Uterus (tissue), 4 donors: ENCODE measurements at regions of chr1 and their contacts with region 1.

Region 1: GRCh38 chr1:161486806-161487741 is 18.2 kb upstream of the FCGR2A start:
- DNase-seq: peak; percentile 31 to 39
- H3K4me3 ChIP-seq: no peak overlapping the region
- H3K27ac ChIP-seq: no peak overlapping the region
- H3K4me1 ChIP-seq: no peaks in the 10 kb centered on the region
- H3K27me3 ChIP-seq: no peaks in the 10 kb centered on the region
- CTCF ChIP-seq: peak; percentile 42 to 66 (median 52)
- POLR2A ChIP-seq: no peak

Region 2: DNA sequence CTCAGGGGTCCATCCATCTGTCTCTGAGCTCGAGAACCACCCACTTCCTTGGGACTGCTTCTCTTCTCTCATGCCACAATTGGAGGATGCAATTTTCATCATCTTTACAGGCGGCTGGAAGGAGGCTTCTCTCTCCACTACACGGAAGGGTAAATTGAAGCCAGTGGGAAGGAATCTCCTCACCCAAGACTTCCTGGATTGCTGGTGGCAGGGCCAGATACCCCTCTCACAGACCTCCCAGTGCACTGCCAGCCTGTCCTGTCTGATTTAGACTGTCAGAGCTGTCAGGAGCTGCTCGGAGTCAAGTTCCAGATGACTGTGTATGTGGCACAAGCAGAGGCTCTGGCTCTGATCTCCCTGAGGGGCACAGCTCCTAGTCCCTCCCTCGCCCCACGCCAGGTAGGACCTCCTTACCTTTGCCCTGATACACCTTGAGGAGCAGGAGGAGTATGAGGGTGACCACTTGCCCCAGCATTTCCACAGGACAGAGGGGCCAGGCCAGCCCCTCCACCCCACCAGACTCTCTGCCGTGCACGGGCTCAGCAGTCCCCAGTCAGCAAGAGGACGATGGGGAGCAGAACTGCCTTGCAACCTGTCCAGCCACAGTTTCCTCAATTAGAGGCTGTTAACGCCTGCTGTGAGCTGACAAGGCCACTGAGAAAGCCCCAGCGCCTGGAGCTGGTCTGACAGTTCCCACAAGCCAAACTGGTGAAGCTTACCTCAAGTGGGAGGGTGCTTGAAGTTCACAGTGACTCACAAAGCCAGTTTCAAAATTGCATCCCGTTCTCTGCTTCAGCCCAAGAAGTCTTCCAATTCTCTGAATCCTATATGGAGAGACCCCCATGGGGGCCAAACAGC is 624.6 kb before region 1 on chr1 and contains the start of gene CD244:
- intact Hi-C with region 1: no loop called
- DNase-seq: no peak
- H3K4me3 ChIP-seq: no peak within 1 kb of the TSS
- H3K27ac ChIP-seq: no peak within 1 kb of the TSS
- H3K4me1 ChIP-seq: no peaks in the 10 kb centered on the region
- H3K27me3 ChIP-seq: no peaks in the 10 kb centered on the region
- CTCF ChIP-seq: no peak
- POLR2A ChIP-seq: no peak
- total RNA-seq, gene CD244: 0.52 to 1.2 TPM in 2 of 4 donors, not detected in the others

Region 3: GRCh38 chr1:161511018-161511755 is 24.1 kb after region 1 on chr1:
- intact Hi-C with region 1: no loop called
- DNase-seq: no peak
- H3K4me3 ChIP-seq: no peak overlapping the region
- H3K27ac ChIP-seq: no peak overlapping the region
- H3K4me1 ChIP-seq: no peaks in the 10 kb centered on the region
- H3K27me3 ChIP-seq: no peaks in the 10 kb centered on the region
- CTCF ChIP-seq: no peak
- POLR2A ChIP-seq: no peak

Region 4: DNA sequence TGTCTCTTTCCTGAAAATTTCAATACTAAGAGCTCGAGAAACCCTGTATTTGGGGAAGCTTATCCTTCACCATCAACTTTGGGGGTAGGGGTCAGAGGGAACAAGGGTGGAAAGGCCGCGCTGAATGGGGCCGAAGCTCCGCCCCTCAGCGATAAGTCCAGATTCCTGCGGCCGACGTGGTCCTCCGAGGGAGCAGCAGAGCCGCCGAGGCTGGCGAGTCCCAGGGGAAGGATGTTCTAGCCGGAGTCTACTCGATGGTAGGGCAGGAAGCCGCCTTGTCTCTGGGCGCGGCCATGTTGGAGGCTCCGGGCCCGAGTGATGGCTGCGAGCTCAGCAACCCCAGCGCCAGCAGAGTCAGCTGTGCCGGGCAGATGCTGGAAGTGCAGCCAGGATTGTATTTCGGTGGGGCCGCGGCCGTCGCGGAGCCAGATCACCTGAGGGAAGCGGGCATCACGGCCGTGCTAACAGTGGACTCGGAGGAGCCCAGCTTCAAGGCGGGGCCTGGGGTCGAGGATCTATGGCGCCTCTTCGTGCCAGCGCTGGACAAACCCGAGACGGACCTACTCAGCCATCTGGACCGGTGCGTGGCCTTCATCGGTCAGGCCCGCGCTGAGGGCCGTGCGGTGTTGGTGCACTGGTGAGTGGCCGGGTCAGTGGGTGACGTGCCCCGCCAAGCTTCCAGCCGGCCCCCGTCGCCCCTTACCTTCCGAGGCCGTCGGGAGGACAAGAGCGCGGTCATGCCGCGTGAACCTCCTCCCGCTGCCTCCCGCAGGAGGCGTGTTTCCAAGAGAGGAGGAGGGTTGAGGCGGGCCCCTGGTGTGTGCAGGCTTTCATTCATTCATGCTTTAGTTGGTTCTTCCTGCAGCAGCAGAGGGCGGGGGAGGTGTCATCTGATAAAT is 262.7 kb after region 1 on chr1 and contains the start of gene DUSP12:
- intact Hi-C with region 1: loop called (anchors 10 kb)
- DNase-seq: peak; percentile 91 to 93
- H3K4me3 ChIP-seq: peak within 1 kb of the TSS; percentile 92 to 98
- H3K27ac ChIP-seq: peak within 1 kb of the TSS; percentile 89 to 90
- H3K4me1 ChIP-seq: no peaks in the 10 kb centered on the region
- H3K27me3 ChIP-seq: no peaks in the 10 kb centered on the region
- CTCF ChIP-seq: peak in 1 of 4 experiments; percentile 25
- POLR2A ChIP-seq: peak in 1 of 2 donors; percentile 51
- total RNA-seq, gene DUSP12: 16.4 to 62.7 (median 29.3) TPM

Region 5: DNA sequence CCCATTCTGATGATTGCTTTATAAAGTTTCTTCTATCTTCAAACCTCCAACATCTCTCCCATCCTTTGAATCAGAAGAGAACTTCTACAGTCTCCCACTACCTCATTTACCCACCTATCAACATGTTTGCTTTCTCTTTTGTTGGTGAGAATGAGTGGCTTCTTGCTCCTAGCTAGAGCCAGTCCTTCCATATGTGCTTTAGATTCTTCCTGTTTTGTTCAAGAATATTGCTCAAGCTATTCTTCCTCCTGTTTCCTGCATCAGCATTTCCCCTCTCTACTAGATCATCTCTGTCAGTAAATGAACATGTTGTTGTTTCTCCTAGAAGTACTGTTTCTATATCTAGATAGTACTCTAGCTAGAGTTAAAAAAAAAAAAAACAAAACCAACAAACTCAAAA is 285.3 kb after region 1 on chr1:
- intact Hi-C with region 1: no loop called
- DNase-seq: no peak
- H3K4me3 ChIP-seq: no peak overlapping the region
- H3K27ac ChIP-seq: no peak overlapping the region
- H3K4me1 ChIP-seq: no peaks in the 10 kb centered on the region
- H3K27me3 ChIP-seq: no peaks in the 10 kb centered on the region
- CTCF ChIP-seq: no peak
- POLR2A ChIP-seq: no peak